ENCODE measurements at regions of chr17 and their contacts with region 1.

Region 1: DNA sequence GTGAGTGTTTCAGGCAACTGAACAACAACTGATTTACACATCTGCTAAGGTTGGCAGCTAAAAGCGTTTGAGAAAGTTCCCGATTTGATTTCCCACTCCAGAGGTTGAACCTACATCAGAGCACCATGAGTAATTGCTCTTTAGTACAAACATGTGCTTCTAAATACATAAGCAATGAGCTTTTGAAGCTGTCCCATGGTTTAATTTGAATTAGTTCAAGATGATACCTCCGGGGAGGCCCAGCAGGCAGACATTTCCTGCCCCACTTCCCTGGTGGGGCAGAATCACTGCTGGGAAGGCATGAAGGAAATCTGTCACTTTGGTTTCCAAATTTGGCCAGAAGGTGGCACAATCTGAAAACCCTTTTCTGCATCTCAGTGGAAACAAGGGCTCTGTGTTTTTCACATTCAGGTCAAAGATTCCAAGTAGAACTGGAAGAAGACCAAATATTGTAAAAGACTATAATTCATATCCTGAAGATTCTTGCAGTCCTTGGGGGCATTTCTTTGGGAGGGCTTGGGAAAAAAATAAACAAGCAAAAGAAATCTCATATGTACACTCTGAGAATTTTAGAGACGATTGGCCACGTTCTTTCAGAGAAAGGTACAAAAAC is 176.2 kb upstream of the FAM20A start:
- DNase-seq: peak; percentile 53 to 65
- ATAC-seq: peak; percentile 57 to 78 (median 58)
- H3K4me3 ChIP-seq: no peak overlapping the region
- H3K27ac ChIP-seq: peak overlapping the region; percentile 7
- H3K4me1 ChIP-seq: peaks cover 4% of the 10 kb centered on the region
- H3K27me3 ChIP-seq: no peaks in the 10 kb centered on the region
- CTCF ChIP-seq: peak; percentile 64

Region 2: DNA sequence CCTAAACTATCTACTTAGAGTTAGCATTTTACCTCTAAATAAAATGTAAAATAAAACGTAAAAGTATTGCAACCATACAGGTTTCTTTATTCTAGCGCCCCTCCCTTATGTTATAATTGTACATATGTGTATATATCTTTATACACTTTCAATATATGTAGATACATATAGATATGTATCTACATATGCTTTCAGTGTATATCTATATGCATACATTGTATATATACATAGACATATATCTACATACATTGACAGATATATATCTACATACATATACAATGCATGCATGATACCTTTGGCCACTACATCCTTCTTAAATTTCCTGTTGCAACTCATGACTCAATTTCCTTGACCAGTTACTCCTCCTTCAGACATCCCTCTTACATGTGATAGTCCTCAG is 935.4 kb before region 1 on chr17:
- intact Hi-C with region 1: no loop called
- DNase-seq: no peak
- ATAC-seq: no peak
- H3K4me3 ChIP-seq: no peak overlapping the region
- H3K27ac ChIP-seq: no peak overlapping the region
- H3K4me1 ChIP-seq: peaks cover 23% of the 10 kb centered on the region
- H3K27me3 ChIP-seq: no peaks in the 10 kb centered on the region
- CTCF ChIP-seq: no peak

Region 3: DNA sequence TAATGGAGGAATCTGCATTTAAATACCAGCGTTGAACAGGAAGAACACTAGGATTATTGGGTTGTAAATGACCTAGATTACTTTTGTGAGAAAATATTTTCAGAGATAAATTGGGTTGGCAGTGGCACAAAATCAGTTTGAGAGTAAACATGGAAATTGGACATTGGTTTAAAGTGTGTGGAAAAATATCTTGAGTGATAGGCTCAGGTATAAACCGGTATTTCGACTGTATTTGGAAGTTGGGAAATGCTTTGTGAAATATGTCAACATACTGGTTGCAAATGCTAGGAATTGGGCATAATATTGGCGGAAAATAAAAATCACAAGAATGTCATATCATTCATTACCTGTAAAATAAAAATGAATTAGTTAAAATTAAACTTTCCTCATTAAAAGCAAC is 250.0 kb before region 1 on chr17:
- intact Hi-C with region 1: no loop called
- DNase-seq: no peak
- ATAC-seq: no peak
- H3K4me3 ChIP-seq: no peak overlapping the region
- H3K27ac ChIP-seq: no peak overlapping the region
- H3K4me1 ChIP-seq: peaks cover 15% of the 10 kb centered on the region
- H3K27me3 ChIP-seq: no peaks in the 10 kb centered on the region
- CTCF ChIP-seq: no peak

Region 4: GRCh38 chr17:68719431-68719830 is 57.9 kb before region 1 on chr17:
- intact Hi-C with region 1: no loop called
- DNase-seq: no peak
- ATAC-seq: no peak
- H3K4me3 ChIP-seq: no peak overlapping the region
- H3K27ac ChIP-seq: no peak overlapping the region
- H3K4me1 ChIP-seq: no peaks in the 10 kb centered on the region
- H3K27me3 ChIP-seq: no peaks in the 10 kb centered on the region
- CTCF ChIP-seq: no peak

Region 5: DNA sequence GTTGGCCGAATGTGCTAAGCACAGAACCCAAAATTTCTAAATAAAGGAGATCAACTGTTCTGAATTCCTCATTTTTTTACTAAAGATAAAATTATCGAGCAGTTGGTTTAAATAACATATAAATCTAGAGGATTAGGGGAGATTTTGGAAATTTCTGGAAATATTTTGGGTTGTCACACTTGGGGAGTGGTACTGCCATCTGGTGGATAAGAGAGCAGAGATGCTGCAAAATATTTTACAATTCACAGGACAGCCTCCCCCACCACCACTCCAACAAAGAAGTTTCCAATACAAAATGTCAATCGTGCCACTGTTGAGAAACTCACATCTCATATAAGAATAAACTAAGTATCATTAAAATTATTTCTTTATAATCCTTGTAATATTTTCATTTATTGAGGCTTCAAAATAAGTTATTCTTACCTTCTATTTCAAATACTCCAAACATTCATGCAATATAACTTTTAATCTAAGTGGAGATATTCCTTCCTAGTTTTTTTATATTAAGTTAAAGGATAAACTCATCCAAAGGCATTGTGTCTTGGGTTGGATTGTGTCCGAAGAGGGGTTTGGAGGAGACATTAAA is 194.9 kb after region 1 on chr17:
- intact Hi-C with region 1: loop called in 1 of 2 experiments (anchors 5 kb)
- DNase-seq: no peak
- ATAC-seq: peak in 1 of 4 donors; percentile 63
- H3K4me3 ChIP-seq: no peak overlapping the region
- H3K27ac ChIP-seq: no peak overlapping the region
- H3K4me1 ChIP-seq: no peaks in the 10 kb centered on the region
- H3K27me3 ChIP-seq: peaks cover 0 to 3% (median 0%) of the 10 kb centered on the region in 3 donors
- CTCF ChIP-seq: peak; percentile 48

Region 6: DNA sequence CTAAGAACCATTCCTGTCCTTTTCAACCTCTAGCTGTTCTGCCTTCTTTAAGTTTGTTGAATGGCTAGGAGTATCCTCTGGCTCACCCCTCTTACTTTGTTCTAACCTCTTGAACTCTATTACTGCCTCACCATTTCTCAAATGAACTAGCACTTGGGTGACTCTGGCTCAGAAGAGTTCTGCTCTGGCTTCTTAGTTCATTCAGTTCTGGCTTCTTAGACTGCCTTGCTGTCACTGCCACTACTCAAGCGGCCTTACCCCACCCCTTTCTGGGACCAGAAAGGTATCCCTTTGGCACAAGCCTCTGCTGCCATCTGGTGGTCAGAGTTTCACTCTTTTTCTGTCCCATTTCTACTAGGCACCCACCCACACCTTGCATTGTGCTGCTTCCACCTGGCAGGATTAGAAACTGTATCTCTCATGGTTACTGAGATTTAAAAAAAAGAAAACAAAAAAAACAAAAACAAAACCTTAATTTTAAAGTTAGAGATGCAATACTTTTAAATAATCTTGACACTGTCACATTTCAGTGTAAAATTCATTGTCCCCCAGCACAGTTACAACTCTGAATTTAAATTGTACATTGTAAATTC is 458.1 kb after region 1 on chr17:
- intact Hi-C with region 1: loop called (anchors 5 to 10 kb)
- DNase-seq: peak; percentile 67 to 80
- ATAC-seq: peak; percentile 39 to 74 (median 66)
- H3K4me3 ChIP-seq: no peak overlapping the region
- H3K27ac ChIP-seq: no peak overlapping the region
- H3K4me1 ChIP-seq: no peaks in the 10 kb centered on the region
- H3K27me3 ChIP-seq: no peaks in the 10 kb centered on the region
- CTCF ChIP-seq: peak; percentile 58

Measured in psoas muscle (tissue), 8 donors.